Endothelial cell of umbilical vein (primary cell): ENCODE measurements at regions of chr15 and their contacts with region 1.

Region 1: GRCh38 chr15:90387537-90388461 is at the start of gene IQGAP1:
- DNase-seq: peak; percentile 95
- H3K4me3 ChIP-seq: peak within 1 kb of the TSS; percentile 74 to 97 (median 95)
- H3K27ac ChIP-seq: peak within 1 kb of the TSS; percentile 88
- H3K4me1 ChIP-seq: peaks cover 30% of the 10 kb centered on the region
- H3K27me3 ChIP-seq: no peaks in the 10 kb centered on the region
- CTCF ChIP-seq: no peak
- POLR2A ChIP-seq: peak; percentile 91
- total RNA-seq, gene IQGAP1: 244 and 258 TPM in 2 replicates

Region 2: GRCh38 chr15:89143503-89144162 is 1244.2 kb before region 1 on chr15:
- CTCF ChIA-PET with region 1: no interaction called
- POLR2A ChIA-PET with region 1: no interaction called
- dilution Hi-C with region 1: no loop called
- intact Hi-C with region 1: no loop called
- DNase-seq: peak; percentile 88
- H3K4me3 ChIP-seq: no peak overlapping the region
- H3K27ac ChIP-seq: peak overlapping the region; percentile 68
- H3K4me1 ChIP-seq: peaks cover 26% of the 10 kb centered on the region
- H3K27me3 ChIP-seq: no peaks in the 10 kb centered on the region
- CTCF ChIP-seq: no peak
- POLR2A ChIP-seq: no peak

Region 3: DNA sequence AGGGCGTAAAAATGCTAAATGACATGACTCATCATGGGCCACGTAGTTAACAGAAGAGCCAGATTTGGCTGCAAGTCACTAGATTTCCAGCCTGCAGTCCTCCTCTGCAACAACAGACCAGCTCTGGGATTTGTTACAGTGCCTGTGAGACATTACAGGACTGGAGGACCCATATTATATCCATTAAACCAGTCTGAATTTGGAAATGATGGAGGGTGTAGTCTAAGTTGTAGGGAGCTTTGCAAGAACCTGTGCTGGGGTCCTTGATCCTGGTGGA is 24.9 kb before region 1 on chr15:
- CTCF ChIA-PET with region 1: interaction called, 34 read pairs
- POLR2A ChIA-PET with region 1: interaction called, 7 read pairs
- dilution Hi-C with region 1: no loop called
- intact Hi-C with region 1: loop called (anchors 1 kb)
- DNase-seq: peak; percentile 53
- H3K4me3 ChIP-seq: no peak overlapping the region
- H3K27ac ChIP-seq: peak overlapping the region; percentile 86
- H3K4me1 ChIP-seq: peaks cover 31% of the 10 kb centered on the region
- H3K27me3 ChIP-seq: no peaks in the 10 kb centered on the region
- CTCF ChIP-seq: no peak
- POLR2A ChIP-seq: no peak

Region 4: DNA sequence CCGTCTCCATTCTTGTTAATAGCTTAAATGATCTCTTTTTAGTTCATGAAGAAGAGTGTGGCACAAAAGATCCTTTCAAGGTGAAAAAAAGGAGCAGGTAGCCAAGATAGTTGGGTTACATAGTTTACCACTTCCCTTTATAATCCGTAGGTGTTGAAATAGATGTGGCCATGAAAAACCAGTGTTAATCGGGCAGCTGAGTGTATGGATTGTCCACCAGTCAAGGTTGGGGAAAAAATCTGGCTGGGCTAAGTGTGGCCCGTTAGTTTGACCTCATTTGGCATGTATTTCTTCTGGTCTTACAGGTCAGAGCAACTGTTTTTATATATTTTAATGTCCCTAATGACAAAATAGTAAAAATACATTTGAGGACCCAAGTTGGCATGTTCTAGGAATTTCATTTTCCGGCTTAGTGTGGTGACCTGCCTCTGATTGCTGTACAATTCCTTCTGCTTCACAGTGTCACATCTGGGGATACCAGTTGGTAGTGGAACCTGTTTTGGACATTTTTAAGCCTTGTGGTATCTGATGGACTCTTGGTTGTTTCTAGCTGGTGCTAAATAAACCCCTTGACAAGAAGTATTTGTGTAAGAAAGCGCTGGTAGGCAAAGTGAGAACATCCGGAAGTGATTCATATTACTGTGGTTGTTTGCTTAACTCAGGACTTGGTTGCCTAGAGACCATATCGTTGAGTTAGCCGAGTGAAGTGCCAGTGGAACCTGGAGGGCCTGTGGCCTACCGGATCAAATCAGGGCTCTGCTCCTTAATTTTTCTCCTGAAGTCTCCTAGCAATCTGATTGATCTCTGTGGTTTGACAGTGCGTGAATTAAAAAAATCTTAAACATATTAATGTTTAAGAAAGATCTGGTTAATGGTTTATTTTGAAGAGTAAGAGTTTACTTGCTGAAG is 12.9 kb after region 1 on chr15:
- CTCF ChIA-PET with region 1: interaction called, 9 read pairs
- POLR2A ChIA-PET with region 1: interaction called, 15 read pairs
- dilution Hi-C with region 1: no loop called
- intact Hi-C with region 1: loop called (anchors 1 kb)
- DNase-seq: peak; percentile 96
- H3K4me3 ChIP-seq: peak overlapping the region in 1 of 3 experiments; percentile 54
- H3K27ac ChIP-seq: peak overlapping the region; percentile 100
- H3K4me1 ChIP-seq: peaks cover 54% of the 10 kb centered on the region
- H3K27me3 ChIP-seq: no peaks in the 10 kb centered on the region
- CTCF ChIP-seq: no peak
- POLR2A ChIP-seq: no peak

Region 5: DNA sequence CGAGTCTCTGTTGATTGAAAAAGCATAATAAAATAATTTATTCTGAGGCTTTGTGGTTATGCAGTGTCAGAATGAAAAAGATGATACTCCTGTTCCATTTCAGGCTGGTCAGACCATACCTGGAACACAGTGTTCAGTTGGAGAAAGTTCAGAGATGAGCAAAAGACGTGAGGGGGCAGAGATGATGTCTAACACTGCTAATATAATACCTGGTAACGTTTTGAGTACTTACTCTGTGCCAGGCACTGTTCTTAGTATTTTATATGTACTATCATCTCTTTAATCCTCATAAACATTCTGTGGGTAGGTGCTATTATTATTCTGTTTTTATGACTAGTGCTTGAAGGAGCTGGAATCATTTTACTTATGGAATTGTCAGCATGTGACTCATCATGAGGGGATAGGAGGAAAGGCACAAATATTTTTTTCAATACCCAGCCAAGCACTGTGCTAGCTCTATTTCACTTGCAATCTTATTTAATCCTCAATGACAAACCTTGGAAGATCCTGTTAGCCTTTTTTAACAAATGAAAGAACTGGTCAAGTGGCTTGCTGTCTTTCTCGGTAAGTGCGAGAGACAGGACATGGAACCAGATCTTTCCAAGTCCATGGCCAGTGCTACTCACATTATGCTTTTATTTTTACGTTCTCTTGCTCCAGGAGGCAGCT is 32.1 kb after region 1 on chr15:
- CTCF ChIA-PET with region 1: interaction called, 3 read pairs
- POLR2A ChIA-PET with region 1: interaction called, 4 read pairs
- dilution Hi-C with region 1: no loop called
- intact Hi-C with region 1: loop called (anchors 1 kb)
- DNase-seq: peak; percentile 80
- H3K4me3 ChIP-seq: no peak overlapping the region
- H3K27ac ChIP-seq: peak overlapping the region; percentile 80
- H3K4me1 ChIP-seq: peaks cover 38% of the 10 kb centered on the region
- H3K27me3 ChIP-seq: no peaks in the 10 kb centered on the region
- CTCF ChIP-seq: no peak
- POLR2A ChIP-seq: peak; percentile 28

Region 6: GRCh38 chr15:90463381-90463780 is 75.6 kb after region 1 on chr15:
- CTCF ChIA-PET with region 1: interaction called, 5 read pairs
- POLR2A ChIA-PET with region 1: no interaction called
- dilution Hi-C with region 1: no loop called
- intact Hi-C with region 1: loop called (anchors 1 kb)
- DNase-seq: peak; percentile 93
- H3K4me3 ChIP-seq: no peak overlapping the region
- H3K27ac ChIP-seq: peak overlapping the region; percentile 70
- H3K4me1 ChIP-seq: peaks cover 58% of the 10 kb centered on the region
- H3K27me3 ChIP-seq: no peaks in the 10 kb centered on the region
- CTCF ChIP-seq: no peak
- POLR2A ChIP-seq: no peak